AG04450 (cell line): ENCODE measurements at regions of chr3 and their contacts with region 1.

Region 1: DNA sequence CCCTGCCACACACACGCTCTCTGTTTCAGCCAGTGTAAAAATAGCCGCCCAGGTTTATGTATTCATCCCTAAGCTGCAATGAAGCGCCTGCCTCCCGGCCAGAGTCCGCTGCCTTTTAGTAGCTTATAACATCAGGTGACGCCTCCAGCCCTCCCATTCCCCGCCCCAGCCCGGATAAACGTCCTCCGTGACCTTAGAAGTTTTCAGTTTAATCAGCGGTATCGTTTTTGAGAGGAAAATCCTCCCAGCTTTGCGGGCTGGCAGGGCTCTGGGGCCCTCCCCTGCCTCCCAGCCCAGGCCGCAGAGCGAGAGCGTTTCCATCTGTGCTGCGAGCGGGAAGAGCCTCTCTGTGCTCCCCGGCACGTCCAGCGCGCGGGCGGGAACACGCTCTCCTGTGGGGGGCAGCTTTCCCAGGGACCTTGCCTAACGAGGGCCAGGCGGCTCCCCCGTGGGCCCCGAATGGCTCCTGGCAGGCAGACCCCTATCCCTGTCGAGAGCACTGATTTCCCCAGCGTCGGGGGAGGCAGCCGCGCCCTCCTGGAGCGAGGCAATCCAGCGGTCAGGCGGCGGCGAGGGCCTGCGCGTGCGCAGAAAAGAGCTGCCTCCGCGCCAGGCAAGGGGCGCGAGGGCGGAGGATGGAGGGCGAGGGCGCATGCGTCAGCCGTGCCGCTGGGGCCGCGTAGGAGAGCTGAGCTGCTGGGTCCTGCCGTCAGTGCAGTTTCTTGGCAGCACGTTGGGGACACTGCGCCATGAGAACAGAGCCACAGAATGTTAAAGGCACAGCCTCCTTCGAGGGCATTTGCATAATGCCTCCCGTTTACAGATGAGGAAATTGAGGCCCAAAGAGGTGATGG is 71.1 kb downstream of the CCNL1 start:
- DNase-seq: peak; percentile 88
- H3K4me3 ChIP-seq: peak overlapping the region; percentile 72
- H3K27ac ChIP-seq: peak overlapping the region; percentile 99
- H3K27me3 ChIP-seq: no peaks in the 10 kb centered on the region
- CTCF ChIP-seq: no peak

Region 2: DNA sequence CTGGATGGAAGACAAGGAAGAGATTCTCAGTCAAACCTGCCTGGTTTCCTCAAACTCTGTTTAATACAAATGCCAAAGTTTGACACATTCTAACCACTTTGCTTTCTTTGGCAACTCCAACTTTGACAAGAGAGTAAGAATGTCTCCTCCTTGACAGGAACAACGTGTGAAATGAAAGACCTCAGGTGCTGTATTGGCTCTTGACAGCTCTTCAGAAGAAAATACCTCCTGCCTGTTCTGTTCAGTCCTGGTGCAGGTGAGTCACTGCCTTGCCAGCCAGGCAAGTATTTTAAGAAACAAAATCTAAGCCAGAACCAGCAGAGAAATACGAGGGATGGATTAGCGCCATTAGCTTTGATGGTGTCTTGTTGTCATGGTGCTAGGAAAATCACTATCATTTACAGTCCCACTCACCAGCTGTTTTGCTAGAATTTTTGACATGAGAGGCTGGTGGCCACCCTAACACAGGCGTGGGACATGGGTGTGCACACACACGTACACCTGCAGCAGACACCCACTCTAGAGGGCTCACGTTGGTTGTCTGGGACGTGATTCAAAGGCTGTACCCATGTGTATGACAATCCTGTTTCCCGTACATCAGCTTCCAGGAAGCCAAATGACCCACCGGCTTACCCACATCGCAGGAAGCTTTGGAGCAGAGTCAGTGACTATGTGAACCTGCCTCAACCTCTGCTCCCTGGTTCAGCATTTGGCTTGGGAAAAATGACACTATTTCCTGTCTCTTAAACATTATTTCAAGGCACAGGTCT is 10.7 kb after region 1 on chr3:
- CTCF ChIA-PET with region 1: interaction called, 14 read pairs
- POLR2A ChIA-PET with region 1: interaction called, 25 read pairs
- DNase-seq: no peak
- H3K4me3 ChIP-seq: no peak overlapping the region
- H3K27ac ChIP-seq: no peak overlapping the region
- H3K27me3 ChIP-seq: no peaks in the 10 kb centered on the region
- CTCF ChIP-seq: no peak

Region 3: DNA sequence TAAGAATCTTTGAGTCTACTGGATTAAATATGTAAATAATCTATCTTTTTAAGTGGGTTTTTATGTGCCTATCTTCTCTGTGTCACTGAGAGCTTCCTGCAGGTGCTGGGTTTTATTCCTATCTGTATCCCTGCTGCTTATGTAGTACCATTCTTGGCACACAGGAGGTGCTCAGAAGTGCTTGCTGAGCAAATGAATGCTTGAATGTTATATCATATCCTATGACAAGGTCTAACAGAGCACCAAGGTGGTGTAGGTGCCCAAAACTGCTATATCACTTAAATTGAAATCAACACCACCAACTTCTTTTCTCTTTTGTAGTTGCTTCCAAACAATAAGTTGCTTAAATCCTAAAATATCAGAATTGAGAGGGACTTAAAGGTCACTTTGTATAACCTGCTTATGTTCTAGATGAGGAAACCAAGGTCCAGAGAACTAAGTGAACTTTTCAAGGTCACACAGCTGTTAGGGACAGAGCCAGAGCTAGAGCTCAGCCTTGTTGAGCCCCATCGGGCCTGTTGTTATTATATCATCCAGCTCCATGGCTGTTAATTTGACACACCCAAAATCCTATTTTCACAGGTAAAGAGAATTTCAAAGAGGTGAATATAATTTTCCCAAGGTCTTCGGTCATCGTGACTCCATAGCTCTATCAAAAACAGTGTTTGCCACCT is 25.1 kb after region 1 on chr3:
- CTCF ChIA-PET with region 1: interaction called, 5 read pairs
- POLR2A ChIA-PET with region 1: interaction called, 13 read pairs
- DNase-seq: no peak
- H3K4me3 ChIP-seq: no peak overlapping the region
- H3K27ac ChIP-seq: no peak overlapping the region
- H3K27me3 ChIP-seq: no peaks in the 10 kb centered on the region
- CTCF ChIP-seq: no peak

Region 4: GRCh38 chr3:157122116-157122515 is 33.3 kb after region 1 on chr3:
- CTCF ChIA-PET with region 1: interaction called, 10 read pairs
- POLR2A ChIA-PET with region 1: interaction called, 36 read pairs
- DNase-seq: peak; percentile 96
- H3K4me3 ChIP-seq: no peak overlapping the region
- H3K27ac ChIP-seq: peak overlapping the region; percentile 73
- H3K27me3 ChIP-seq: no peaks in the 10 kb centered on the region
- CTCF ChIP-seq: no peak

Region 5: DNA sequence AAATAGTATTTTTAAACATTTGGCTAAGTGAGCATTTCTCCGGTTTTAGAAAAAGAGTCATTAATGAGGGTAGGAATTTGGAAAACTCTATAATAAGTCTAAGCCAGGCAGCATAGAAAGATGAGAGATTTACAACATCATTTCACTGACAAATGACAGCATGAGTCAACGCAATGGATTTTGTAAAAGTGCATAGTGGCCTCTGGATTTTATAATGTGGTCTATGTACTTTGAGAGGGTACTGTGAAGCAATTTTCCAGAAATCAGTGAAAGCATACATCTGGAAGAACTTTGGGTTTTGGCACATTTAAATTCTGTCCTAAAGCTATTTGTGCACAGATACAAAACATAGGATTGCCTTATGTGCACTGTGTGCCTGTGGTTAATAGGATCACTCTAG is 201.9 kb after region 1 on chr3:
- CTCF ChIA-PET with region 1: no interaction called
- POLR2A ChIA-PET with region 1: no interaction called
- DNase-seq: peak; percentile 21
- H3K4me3 ChIP-seq: no peak overlapping the region
- H3K27ac ChIP-seq: no peak overlapping the region
- H3K27me3 ChIP-seq: no peaks in the 10 kb centered on the region
- CTCF ChIP-seq: no peak